ENCODE measurements at regions of chr1 and their contacts with region 1.

Region 1: DNA sequence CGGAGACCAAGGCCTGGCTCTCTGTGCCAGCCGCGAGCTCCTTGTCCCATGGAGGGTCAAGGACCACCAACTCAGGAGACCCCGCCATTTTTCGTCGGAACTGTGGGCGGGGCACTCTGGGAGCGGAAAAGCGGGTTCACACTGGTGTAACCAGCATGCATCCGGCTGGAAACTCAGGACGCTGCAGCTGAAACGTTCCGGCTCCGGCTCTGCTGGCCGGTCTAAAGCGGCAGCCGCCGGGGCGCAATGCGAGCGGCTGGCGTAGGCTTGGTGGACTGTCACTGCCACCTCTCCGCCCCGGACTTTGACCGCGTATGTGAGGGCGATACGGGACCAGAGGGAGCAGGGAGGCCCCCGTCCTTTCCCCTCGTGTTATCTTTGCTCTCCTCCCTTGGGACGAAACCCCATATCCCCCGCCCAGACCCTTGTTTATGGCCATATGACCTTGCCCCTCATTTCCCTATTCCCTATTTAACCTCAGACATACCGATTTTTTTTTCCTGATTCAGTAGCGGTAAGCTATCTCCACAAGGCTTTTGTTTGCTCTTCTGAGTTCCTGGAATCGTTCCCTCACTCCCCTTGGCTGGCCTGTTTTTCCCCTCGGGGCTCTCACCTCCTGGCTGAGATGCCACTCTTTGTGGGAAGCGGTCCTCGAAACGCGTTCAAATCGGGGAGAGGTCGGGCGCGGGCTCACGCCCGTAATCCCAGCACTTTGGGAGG is at the starts of genes NSL1 and TATDN3:
- DNase-seq: peak; percentile 87 to 98 (median 95)
- ATAC-seq: peak; percentile 93
- H3K4me3 ChIP-seq: peak within 1 kb of the TSS; percentile 93 to 96
- H3K4me3 Mint-ChIP-seq: peak within 1 kb of the TSS; percentile 97
- H3K27ac ChIP-seq: peak within 1 kb of the TSS; percentile 79 to 87
- H3K27ac Mint-ChIP-seq: peak within 1 kb of the TSS; percentile 96
- H3K4me1 ChIP-seq: peaks cover 22% of the 10 kb centered on the region
- H3K4me1 Mint-ChIP-seq: peaks cover 37% of the 10 kb centered on the region
- H3K27me3 ChIP-seq: no peaks in the 10 kb centered on the region
- H3K27me3 Mint-ChIP-seq: no peaks in the 10 kb centered on the region
- CTCF ChIP-seq: no peak
- total RNA-seq, gene NSL1: 13.0 to 19.0 TPM
- total RNA-seq, gene TATDN3: 10.7 to 11.6 TPM

Region 2: DNA sequence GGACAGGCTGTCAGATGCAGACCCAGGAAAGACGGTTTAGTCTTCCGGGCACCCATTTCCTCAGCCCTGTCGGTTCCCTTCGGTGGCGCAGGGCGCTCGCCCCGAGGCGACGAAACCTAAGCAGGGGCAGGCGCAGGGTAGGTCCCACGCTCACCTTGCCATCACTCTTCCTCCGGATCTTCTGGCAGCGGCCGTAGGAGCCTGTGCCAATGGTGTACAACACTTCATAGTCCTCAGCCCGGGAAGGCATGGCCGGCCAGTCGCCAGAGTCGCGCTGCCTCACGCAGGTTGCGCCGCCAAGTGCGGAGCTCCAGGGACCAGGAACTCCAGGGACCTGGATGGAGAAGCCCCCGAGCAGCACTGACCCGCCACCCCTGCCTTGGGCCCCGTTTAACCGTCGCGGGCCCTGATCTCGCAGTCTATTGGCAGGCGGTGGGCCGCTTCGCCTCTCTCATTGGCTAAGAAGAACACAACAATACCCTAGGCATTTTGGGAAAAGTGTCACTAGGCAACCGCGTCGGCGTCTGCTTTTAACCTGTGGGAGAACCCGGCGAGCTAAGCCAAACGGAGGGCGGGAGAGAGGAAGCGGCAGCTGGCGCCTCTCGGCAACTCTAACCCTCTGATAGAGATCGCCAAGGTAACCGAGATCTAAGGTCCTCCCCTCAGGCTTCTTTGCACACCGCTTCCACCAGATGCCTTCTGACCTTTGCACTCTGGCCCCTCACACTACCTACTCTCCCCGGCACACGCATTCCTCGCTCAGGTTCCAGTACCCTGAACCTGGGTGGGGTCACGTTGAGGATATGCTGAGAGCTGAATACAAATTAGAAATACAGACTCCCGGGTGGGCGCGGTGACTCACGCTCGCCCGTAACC is 1116.4 kb before region 1 on chr1 and contains the start of gene NEK2:
- CTCF ChIA-PET with region 1: no interaction called
- POLR2A ChIA-PET with region 1: no interaction called
- intact Hi-C with region 1: loop called (anchors 2 to 5 kb)
- DNase-seq: peak; percentile 61 to 92 (median 84)
- ATAC-seq: peak; percentile 89
- H3K4me3 ChIP-seq: peak within 1 kb of the TSS; percentile 67 to 85
- H3K4me3 Mint-ChIP-seq: peak within 1 kb of the TSS; percentile 91
- H3K27ac ChIP-seq: peak within 1 kb of the TSS; percentile 18 to 22
- H3K27ac Mint-ChIP-seq: peak within 1 kb of the TSS; percentile 76
- H3K4me1 ChIP-seq: peaks cover 7% of the 10 kb centered on the region
- H3K4me1 Mint-ChIP-seq: peaks cover 14% of the 10 kb centered on the region
- H3K27me3 ChIP-seq: no peaks in the 10 kb centered on the region
- H3K27me3 Mint-ChIP-seq: no peaks in the 10 kb centered on the region
- CTCF ChIP-seq: no peak
- total RNA-seq, gene NEK2: 0.19 to 0.35 TPM

Region 3: DNA sequence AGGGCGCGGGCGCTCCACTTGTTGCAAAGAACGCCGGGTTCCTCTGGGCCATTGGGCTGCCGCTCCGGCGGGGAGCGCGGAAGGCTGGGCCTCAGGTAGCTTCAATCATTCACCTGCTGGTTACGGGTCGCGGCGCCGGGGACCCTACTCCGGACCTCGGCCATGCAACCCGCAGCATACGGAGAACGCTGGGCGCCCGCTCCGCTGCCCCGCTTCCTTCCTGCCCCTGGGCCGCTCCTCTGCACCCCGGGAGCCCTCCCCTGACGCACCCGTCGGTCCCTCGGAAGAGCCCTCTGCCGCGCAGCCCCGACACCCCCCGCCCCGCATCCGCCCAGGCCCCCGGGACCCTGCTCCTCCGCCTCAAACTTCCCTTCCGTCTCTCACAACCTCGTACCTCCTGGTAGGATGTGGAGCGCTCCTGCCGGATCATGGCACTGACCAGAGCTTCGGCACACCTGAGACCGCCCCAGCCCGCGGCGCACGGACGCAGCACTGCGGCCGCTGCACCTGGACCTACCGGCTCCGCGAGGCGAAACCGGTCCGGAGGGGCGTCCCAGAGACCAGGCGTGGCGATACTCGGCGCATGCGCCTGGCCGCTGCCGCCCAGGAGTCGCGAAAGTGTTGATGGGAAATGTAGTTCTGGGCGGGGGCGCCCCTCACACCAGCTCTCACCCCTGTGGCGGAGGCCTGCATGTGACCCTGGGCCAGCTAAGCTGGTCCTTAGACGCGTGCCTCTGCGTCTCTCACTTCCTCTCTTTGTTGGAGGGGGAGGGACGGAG is 377.3 kb before region 1 on chr1 and contains the start of gene PACC1:
- CTCF ChIA-PET with region 1: no interaction called
- POLR2A ChIA-PET with region 1: no interaction called
- intact Hi-C with region 1: loop called (anchors 1 to 5 kb)
- DNase-seq: peak; percentile 73 to 95 (median 86)
- ATAC-seq: peak; percentile 91
- H3K4me3 ChIP-seq: peak within 1 kb of the TSS; percentile 80 to 98
- H3K4me3 Mint-ChIP-seq: peak within 1 kb of the TSS; percentile 97
- H3K27ac ChIP-seq: peak within 1 kb of the TSS; percentile 59 to 67
- H3K27ac Mint-ChIP-seq: peak within 1 kb of the TSS; percentile 92
- H3K4me1 ChIP-seq: peaks cover 25% of the 10 kb centered on the region
- H3K4me1 Mint-ChIP-seq: peaks cover 40% of the 10 kb centered on the region
- H3K27me3 ChIP-seq: no peaks in the 10 kb centered on the region
- H3K27me3 Mint-ChIP-seq: no peaks in the 10 kb centered on the region
- CTCF ChIP-seq: no peak
- total RNA-seq, gene PACC1: 2.6 to 2.9 TPM

Region 4: GRCh38 chr1:212857992-212858460 is 66.2 kb after region 1 on chr1 and contains the start of gene FLVCR1:
- CTCF ChIA-PET with region 1: interaction called, 4 read pairs
- POLR2A ChIA-PET with region 1: interaction called, 4 read pairs
- intact Hi-C with region 1: loop called (anchors 1 kb)
- DNase-seq: peak; percentile 72 to 95 (median 87)
- ATAC-seq: peak; percentile 95
- H3K4me3 ChIP-seq: peak within 1 kb of the TSS; percentile 82 to 89
- H3K4me3 Mint-ChIP-seq: peak within 1 kb of the TSS; percentile 96
- H3K27ac ChIP-seq: peak within 1 kb of the TSS; percentile 64
- H3K27ac Mint-ChIP-seq: peak within 1 kb of the TSS; percentile 91
- H3K4me1 ChIP-seq: peaks cover 24% of the 10 kb centered on the region
- H3K4me1 Mint-ChIP-seq: peaks cover 21% of the 10 kb centered on the region
- H3K27me3 ChIP-seq: no peaks in the 10 kb centered on the region
- H3K27me3 Mint-ChIP-seq: no peaks in the 10 kb centered on the region
- CTCF ChIP-seq: no peak
- total RNA-seq, gene FLVCR1: 6.5 to 6.6 TPM

Region 5: DNA sequence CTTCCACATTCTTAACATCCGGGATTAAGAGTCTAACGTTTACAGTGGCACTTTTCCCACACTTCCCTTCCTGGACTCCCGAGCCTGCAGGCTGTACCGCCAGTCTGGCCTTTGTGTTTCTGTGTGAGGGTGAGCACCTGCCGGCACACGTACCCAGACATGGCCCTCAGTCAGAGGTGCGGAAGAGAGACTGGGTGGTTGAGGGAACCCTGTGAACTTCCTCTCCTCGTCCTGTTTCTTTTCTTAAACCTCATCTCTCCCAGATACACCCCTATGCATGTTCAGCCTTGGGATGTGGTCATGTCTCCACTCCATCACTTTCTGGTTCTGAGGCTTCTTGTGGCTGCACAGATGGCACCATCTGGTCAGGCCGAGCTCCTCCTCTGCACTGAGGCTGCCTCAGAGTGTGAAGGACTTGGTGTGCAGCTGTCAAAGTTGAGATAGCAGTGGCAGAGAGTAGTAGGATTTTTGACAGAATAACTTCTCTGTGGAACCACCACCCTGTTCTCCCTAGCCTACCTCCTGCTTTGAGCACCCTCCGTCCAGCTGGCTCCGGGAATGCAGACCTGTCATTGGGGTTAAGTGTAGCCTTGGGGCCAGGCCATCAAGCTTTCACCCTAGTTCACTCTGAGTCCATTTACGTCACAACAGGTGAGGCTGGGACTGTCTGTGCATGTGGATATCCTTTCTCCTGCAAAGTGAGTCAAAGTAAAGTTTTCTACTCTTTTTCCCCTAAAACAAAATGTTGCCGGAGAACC is 189.9 kb after region 1 on chr1:
- CTCF ChIA-PET with region 1: no interaction called
- POLR2A ChIA-PET with region 1: no interaction called
- intact Hi-C with region 1: no loop called
- DNase-seq: no peak
- ATAC-seq: no peak
- H3K4me3 ChIP-seq: no peak overlapping the region
- H3K4me3 Mint-ChIP-seq: no peak overlapping the region
- H3K27ac ChIP-seq: no peak overlapping the region
- H3K27ac Mint-ChIP-seq: no peak overlapping the region
- H3K4me1 ChIP-seq: no peaks in the 10 kb centered on the region
- H3K4me1 Mint-ChIP-seq: no peaks in the 10 kb centered on the region
- H3K27me3 ChIP-seq: no peaks in the 10 kb centered on the region
- H3K27me3 Mint-ChIP-seq: peaks cover 5% of the 10 kb centered on the region
- CTCF ChIP-seq: no peak

Region 6: GRCh38 chr1:213015099-213016050 is 223.5 kb after region 1 on chr1 and contains the start of gene ANGEL2:
- CTCF ChIA-PET with region 1: no interaction called
- POLR2A ChIA-PET with region 1: no interaction called
- intact Hi-C with region 1: loop called (anchors 1 kb)
- DNase-seq: peak; percentile 90 to 99 (median 95)
- ATAC-seq: peak; percentile 97
- H3K4me3 ChIP-seq: peak within 1 kb of the TSS; percentile 90 to 96
- H3K4me3 Mint-ChIP-seq: peak within 1 kb of the TSS; percentile 100
- H3K27ac ChIP-seq: peak within 1 kb of the TSS; percentile 90 to 92
- H3K27ac Mint-ChIP-seq: peak within 1 kb of the TSS; percentile 100
- H3K4me1 ChIP-seq: peaks cover 19% of the 10 kb centered on the region
- H3K4me1 Mint-ChIP-seq: peaks cover 40% of the 10 kb centered on the region
- H3K27me3 ChIP-seq: no peaks in the 10 kb centered on the region
- H3K27me3 Mint-ChIP-seq: no peaks in the 10 kb centered on the region
- CTCF ChIP-seq: no peak
- total RNA-seq, gene ANGEL2: 47.4 to 52.5 TPM

Region 7: DNA sequence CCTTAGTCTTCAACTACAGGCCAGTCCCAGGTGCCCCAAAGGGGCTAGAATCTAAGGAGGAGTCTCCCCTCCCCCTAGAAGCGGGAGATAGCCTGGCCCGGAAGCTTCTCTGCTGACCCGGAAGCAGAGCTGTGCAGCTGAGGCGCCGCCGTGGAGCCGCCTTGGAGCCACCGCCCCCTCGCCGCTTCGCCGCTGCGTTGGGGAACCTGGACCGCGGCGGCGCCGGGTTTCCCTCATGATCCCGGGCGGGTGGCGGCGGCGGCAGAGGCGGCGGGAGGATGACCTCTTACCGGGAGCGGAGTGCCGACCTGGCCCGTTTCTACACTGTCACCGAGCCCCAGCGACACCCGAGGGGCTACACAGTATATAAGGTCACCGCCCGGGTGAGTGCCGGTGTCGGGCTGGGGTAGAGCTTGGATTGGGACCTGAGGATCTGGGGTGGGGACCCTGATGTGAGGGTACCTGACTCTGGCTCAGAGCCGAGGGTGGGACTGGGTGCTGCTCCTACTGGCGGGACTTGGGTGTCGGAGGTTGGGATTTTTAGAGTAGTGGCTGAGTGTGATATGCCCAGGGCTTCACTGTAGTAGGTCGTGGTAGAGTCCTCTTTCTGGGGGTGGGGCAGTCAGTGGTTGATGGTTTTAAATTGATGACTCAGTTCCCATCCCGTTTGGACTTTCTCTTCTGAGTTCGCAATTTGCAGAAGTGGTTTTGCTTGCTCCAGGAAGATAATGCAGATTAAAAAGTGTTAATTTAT is 259.5 kb after region 1 on chr1 and contains the start of gene RPS6KC1:
- CTCF ChIA-PET with region 1: no interaction called
- POLR2A ChIA-PET with region 1: interaction called, 4 read pairs
- intact Hi-C with region 1: loop called (anchors 1 kb)
- DNase-seq: peak; percentile 53 to 90 (median 85)
- ATAC-seq: peak; percentile 94
- H3K4me3 ChIP-seq: peak within 1 kb of the TSS; percentile 95 to 99
- H3K4me3 Mint-ChIP-seq: peak within 1 kb of the TSS; percentile 93
- H3K27ac ChIP-seq: peak within 1 kb of the TSS; percentile 54 to 86
- H3K27ac Mint-ChIP-seq: peak within 1 kb of the TSS; percentile 95
- H3K4me1 ChIP-seq: peaks cover 15% of the 10 kb centered on the region
- H3K4me1 Mint-ChIP-seq: peaks cover 35% of the 10 kb centered on the region
- H3K27me3 ChIP-seq: peaks cover 0 to 4% of the 10 kb centered on the region in 2 experiments
- H3K27me3 Mint-ChIP-seq: peaks cover 15% of the 10 kb centered on the region
- CTCF ChIP-seq: no peak
- total RNA-seq, gene RPS6KC1: 5.3 to 5.6 TPM

Region 8: DNA sequence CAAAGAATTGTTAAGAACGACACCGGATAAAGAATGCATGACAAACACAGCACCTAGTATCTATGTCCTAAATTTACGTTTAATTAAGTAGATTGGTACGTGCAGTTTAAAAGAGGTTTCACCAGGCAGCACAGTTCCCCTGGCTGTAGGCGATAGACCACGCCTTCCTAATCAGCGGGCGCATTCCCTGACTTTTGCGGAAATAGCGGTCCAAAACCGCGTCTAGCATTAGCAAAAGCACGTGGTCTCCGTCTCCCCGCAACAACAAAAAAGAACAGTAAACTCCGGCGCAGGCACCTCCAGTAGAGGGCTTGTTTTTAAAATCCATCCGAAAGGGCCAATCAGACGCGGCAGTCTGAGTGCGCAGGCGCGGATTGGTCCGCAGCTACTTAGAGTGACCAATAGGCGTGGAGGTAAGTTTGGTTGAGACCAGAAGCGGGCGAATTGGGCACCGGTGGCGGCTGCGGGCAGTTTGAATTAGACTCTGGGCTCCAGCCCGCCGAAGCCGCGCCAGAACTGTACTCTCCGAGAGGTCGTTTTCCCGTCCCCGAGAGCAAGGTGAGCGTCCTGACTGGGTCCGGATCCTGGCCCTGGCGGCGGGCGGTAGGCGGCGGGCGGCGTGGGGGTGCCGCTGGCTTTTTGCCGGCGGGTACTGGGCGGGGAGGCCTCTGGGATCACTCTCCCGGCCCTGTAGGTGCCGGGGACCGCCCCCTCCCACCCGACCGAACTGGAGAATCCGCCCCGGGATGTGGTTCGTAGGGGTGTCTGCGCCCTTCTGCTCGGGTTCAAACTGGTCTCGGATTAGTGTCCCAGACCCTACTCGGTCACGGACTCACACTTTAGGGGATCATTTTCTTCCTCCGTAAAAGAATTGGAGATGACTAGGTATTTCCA is 1811.2 kb after region 1 on chr1 and contains the start of gene CENPF:
- CTCF ChIA-PET with region 1: no interaction called
- POLR2A ChIA-PET with region 1: no interaction called
- intact Hi-C with region 1: loop called in 1 of 2 experiments (anchors 5 kb)
- DNase-seq: peak; percentile 85 to 97 (median 91)
- ATAC-seq: peak; percentile 98
- H3K4me3 ChIP-seq: peak within 1 kb of the TSS; percentile 78 to 90
- H3K4me3 Mint-ChIP-seq: peak within 1 kb of the TSS; percentile 91
- H3K27ac ChIP-seq: peak within 1 kb of the TSS; percentile 4 to 39
- H3K27ac Mint-ChIP-seq: peak within 1 kb of the TSS; percentile 56
- H3K4me1 ChIP-seq: peaks cover 7% of the 10 kb centered on the region
- H3K4me1 Mint-ChIP-seq: peaks cover 22% of the 10 kb centered on the region
- H3K27me3 ChIP-seq: no peaks in the 10 kb centered on the region
- H3K27me3 Mint-ChIP-seq: no peaks in the 10 kb centered on the region
- CTCF ChIP-seq: no peak
- total RNA-seq, gene CENPF: 1.5 to 2.0 TPM

Measured in CD8-positive, alpha-beta T cell (primary cell).